OCI-LY7 (cell line): ENCODE measurements at regions of chr9 and their contacts with region 1.

Region 1: GRCh38 chr9:114906908-114907571 is 23.4 kb downstream of the TNFSF8 start:
- DNase-seq: no peak
- H3K4me3 ChIP-seq: no peak overlapping the region
- H3K27ac ChIP-seq: no peak overlapping the region
- H3K4me1 ChIP-seq: peaks cover 89% of the 10 kb centered on the region
- CTCF ChIP-seq: peak; percentile 82

Region 2: GRCh38 chr9:114216081-114216480 is 691.0 kb before region 1 on chr9:
- CTCF ChIA-PET with region 1: no interaction called
- POLR2A ChIA-PET with region 1: no interaction called
- intact Hi-C with region 1: no loop called
- DNase-seq: no peak
- H3K4me3 ChIP-seq: no peak overlapping the region
- H3K27ac ChIP-seq: no peak overlapping the region
- H3K4me1 ChIP-seq: no peaks in the 10 kb centered on the region
- CTCF ChIP-seq: no peak

Region 3: DNA sequence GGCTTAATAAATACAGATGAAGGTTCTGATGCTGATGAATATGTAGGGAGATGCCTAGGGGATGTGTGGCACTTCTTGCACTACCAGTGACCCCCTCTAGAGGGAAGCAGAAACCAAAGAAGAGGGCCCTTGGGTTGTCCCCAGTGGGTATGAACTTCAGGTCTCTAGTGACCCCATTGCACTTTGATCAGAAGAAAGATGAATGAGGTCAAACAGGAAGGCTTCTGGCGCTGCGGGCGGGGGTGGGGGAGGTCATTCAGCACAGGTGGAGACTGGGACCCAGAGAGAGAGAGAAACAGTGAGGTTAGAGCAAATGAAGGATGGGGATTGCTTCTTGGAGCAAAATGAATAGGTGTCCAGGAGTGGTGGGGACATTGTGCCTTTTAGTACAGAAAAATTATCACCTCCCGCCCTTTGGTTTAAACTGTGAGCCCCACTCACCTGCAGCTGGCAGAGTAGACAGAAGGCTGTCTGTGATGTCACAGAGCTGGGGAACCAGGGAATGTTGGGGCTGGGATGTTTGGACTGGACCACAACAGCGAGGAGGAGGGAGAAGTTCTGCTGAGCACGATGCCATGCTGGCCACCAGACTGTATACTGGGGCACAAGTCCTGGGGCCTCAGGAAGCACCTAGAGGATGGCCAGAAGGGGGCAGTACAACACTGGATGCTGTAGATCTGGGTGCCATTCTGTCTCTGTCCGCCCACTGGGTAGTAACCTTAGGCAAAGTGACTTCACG is 225.3 kb before region 1 on chr9 and contains the start of gene TEX48:
- CTCF ChIA-PET with region 1: no interaction called
- POLR2A ChIA-PET with region 1: no interaction called
- intact Hi-C with region 1: loop called (anchors 5 kb)
- DNase-seq: peak; percentile 74
- H3K4me3 ChIP-seq: no peak within 1 kb of the TSS
- H3K27ac ChIP-seq: no peak within 1 kb of the TSS
- H3K4me1 ChIP-seq: peaks cover 4% of the 10 kb centered on the region
- CTCF ChIP-seq: peak; percentile 84
- total RNA-seq, gene TEX48: not detected in 2 replicates

Region 4: GRCh38 chr9:114805670-114806525 is 101.1 kb before region 1 on chr9 and contains the start of gene TNFSF15:
- CTCF ChIA-PET with region 1: no interaction called
- POLR2A ChIA-PET with region 1: interaction called, 3 read pairs
- intact Hi-C with region 1: loop called (anchors 5 kb)
- DNase-seq: peak; percentile 50
- H3K4me3 ChIP-seq: peak within 1 kb of the TSS; percentile 32
- H3K27ac ChIP-seq: no peak within 1 kb of the TSS
- H3K4me1 ChIP-seq: peaks cover 37% of the 10 kb centered on the region
- CTCF ChIP-seq: no peak
- total RNA-seq, gene TNFSF15: 0.08 TPM in 1 of 2 replicates, not detected in the other

Region 5: GRCh38 chr9:114869845-114870244 is 37.2 kb before region 1 on chr9:
- CTCF ChIA-PET with region 1: no interaction called
- POLR2A ChIA-PET with region 1: no interaction called
- intact Hi-C with region 1: no loop called
- DNase-seq: peak; percentile 28
- H3K4me3 ChIP-seq: no peak overlapping the region
- H3K27ac ChIP-seq: no peak overlapping the region
- H3K4me1 ChIP-seq: peaks cover 6% of the 10 kb centered on the region
- CTCF ChIP-seq: no peak

Region 6: GRCh38 chr9:114894801-114895433 is 12.1 kb before region 1 on chr9:
- CTCF ChIA-PET with region 1: interaction called, 11 read pairs
- POLR2A ChIA-PET with region 1: interaction called, 30 read pairs
- intact Hi-C with region 1: loop called (anchors 1 kb)
- DNase-seq: peak; percentile 56
- H3K4me3 ChIP-seq: peak overlapping the region; percentile 22
- H3K27ac ChIP-seq: peak overlapping the region; percentile 93
- H3K4me1 ChIP-seq: peaks cover 71% of the 10 kb centered on the region
- CTCF ChIP-seq: no peak

Region 7: GRCh38 chr9:115013998-115014397 is 107.0 kb after region 1 on chr9:
- CTCF ChIA-PET with region 1: interaction called, 5 read pairs
- POLR2A ChIA-PET with region 1: no interaction called
- intact Hi-C with region 1: loop called (anchors 1 kb)
- DNase-seq: peak; percentile 83
- H3K4me3 ChIP-seq: no peak overlapping the region
- H3K27ac ChIP-seq: no peak overlapping the region
- H3K4me1 ChIP-seq: peaks cover 4% of the 10 kb centered on the region
- CTCF ChIP-seq: peak; percentile 95